Activated naive CD4-positive, alpha-beta T cell treated with anti-CD3 and anti-CD28 coated beads for 36 hours (primary cell): ENCODE measurements at regions of chr20 and their contacts with region 1.

Region 1: GRCh38 chr20:38962044-38962927 is at the start of gene DHX35:
- DNase-seq: peak; percentile 99
- H3K4me3 Mint-ChIP-seq: peak within 1 kb of the TSS; percentile 95
- H3K27ac Mint-ChIP-seq: peak within 1 kb of the TSS; percentile 98
- H3K4me1 Mint-ChIP-seq: peaks cover 32% of the 10 kb centered on the region
- H3K27me3 Mint-ChIP-seq: no peaks in the 10 kb centered on the region
- total RNA-seq, gene DHX35: 9.5 to 10.3 TPM

Region 2: GRCh38 chr20:38997622-38998021 is 35.3 kb after region 1 on chr20:
- CTCF ChIA-PET with region 1: interaction called, 14 read pairs
- intact Hi-C with region 1: no loop called
- DNase-seq: peak; percentile 60
- H3K4me3 Mint-ChIP-seq: no peak overlapping the region
- H3K27ac Mint-ChIP-seq: peak overlapping the region; percentile 43
- H3K4me1 Mint-ChIP-seq: peaks cover 15% of the 10 kb centered on the region
- H3K27me3 Mint-ChIP-seq: no peaks in the 10 kb centered on the region

Region 3: GRCh38 chr20:39234520-39235095 is 272.3 kb after region 1 on chr20:
- CTCF ChIA-PET with region 1: no interaction called
- intact Hi-C with region 1: no loop called
- DNase-seq: no peak
- H3K4me3 Mint-ChIP-seq: no peak overlapping the region
- H3K27ac Mint-ChIP-seq: no peak overlapping the region
- H3K4me1 Mint-ChIP-seq: no peaks in the 10 kb centered on the region
- H3K27me3 Mint-ChIP-seq: no peaks in the 10 kb centered on the region